Heart left ventricle (tissue), 16 donors: ENCODE measurements at regions of chr14 and their contacts with region 1.

Region 1: DNA sequence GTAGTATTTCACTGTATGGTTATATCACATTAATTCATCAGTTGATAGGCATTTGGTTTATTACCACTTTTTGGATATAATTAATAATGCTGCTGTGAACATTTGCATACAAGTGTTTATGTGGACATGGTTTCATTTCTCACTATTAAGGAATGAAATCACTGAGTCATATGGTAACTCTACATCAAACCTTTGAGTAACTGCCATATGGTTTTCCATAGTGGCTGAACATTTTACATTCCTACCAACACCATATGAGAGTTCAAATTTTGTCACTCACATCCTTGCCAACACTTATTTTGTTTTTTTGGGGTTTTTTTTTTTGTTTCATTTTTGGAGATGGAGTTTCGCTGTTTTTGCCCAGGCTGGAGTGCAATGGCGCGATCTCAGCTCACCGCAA is 30.2 kb upstream of the EAPP start:
- DNase-seq: no peak
- ATAC-seq: no peak
- H3K4me3 ChIP-seq: no peak overlapping the region
- H3K27ac ChIP-seq: no peak overlapping the region
- H3K4me1 ChIP-seq: no peaks in the 10 kb centered on the region
- H3K27me3 ChIP-seq: no peaks in the 10 kb centered on the region
- CTCF ChIP-seq: no peak
- POLR2A ChIP-seq: no peak

Region 2: GRCh38 chr14:34522496-34522895 is 47.3 kb before region 1 on chr14:
- intact Hi-C with region 1: loop called in 1 of 10 experiments (anchors 10 kb)
- DNase-seq: no peak
- ATAC-seq: no peak
- H3K4me3 ChIP-seq: no peak overlapping the region
- H3K27ac ChIP-seq: no peak overlapping the region
- H3K4me1 ChIP-seq: no peaks in the 10 kb centered on the region
- H3K27me3 ChIP-seq: no peaks in the 10 kb centered on the region
- CTCF ChIP-seq: no peak
- POLR2A ChIP-seq: no peak